Spleen (tissue), 13 donors: ENCODE measurements at regions of chr5 and their contacts with region 1.

Region 1: GRCh38 chr5:139696894-139697658 is 48.9 kb downstream of the CXXC5 start:
- DNase-seq: peak; percentile 86
- H3K4me3 ChIP-seq: peak overlapping the region in 7 of 8 donors; percentile 4 to 57 (median 21)
- H3K27ac ChIP-seq: peak overlapping the region in 7 of 8 donors; percentile 55 to 84 (median 80)
- H3K4me1 ChIP-seq: peaks cover 26 to 68% (median 48%) of the 10 kb centered on the region in 6 donors
- H3K27me3 ChIP-seq: peaks cover 0 to 40% (median 14%) of the 10 kb centered on the region in 7 donors
- CTCF ChIP-seq: no peak
- POLR2A ChIP-seq: no peak

Region 2: DNA sequence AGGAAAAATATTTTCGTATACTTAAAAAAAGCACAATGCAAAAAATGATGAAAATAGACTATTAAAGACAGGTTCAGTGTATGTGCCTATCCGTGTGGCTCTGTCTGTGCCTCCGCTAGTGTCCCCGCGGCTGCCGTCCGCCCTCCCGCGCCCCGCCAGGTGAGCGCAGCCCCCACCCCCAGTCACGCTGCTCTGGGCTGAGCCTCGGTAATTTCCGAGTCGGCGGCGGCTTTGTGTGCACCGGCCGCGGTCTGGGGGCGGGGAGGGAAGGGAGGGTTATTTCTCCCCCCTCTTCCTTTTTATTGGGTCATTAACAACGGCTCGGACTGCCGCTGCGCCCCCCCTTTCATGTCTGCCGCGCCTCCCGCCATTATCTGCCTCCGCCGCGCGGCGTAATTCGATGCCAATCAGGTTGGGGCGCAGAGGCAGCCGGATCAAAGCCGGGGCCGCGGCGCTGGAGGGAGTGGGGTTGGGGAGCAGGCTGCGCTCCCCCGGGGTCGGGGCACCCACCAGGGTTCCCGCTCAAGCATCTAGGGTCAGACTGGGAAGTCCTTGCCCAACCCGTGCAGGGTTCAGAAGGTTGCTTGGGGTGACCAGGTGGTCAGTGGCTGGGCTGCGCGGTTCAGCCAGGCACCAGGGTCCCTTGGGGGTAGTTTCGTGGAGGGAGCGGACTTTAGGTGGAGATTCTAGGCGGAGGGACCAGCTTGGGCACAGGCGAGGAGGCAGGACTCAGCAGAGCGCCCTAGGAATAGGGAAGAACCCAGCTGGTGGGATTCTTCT is 59.0 kb after region 1 on chr5:
- intact Hi-C with region 1: loop called (anchors 10 kb)
- DNase-seq: no peak
- H3K4me3 ChIP-seq: peak overlapping the region in 6 of 8 donors; percentile 9 to 59 (median 18)
- H3K27ac ChIP-seq: no peak overlapping the region
- H3K4me1 ChIP-seq: peaks cover 0 to 54% (median 36%) of the 10 kb centered on the region in 6 donors
- H3K27me3 ChIP-seq: peaks cover 0 to 76% (median 24%) of the 10 kb centered on the region in 7 donors
- CTCF ChIP-seq: no peak
- POLR2A ChIP-seq: no peak

Region 3: GRCh38 chr5:140011297-140011802 is 314.3 kb after region 1 on chr5:
- intact Hi-C with region 1: no loop called
- DNase-seq: no peak
- H3K4me3 ChIP-seq: no peak overlapping the region
- H3K27ac ChIP-seq: no peak overlapping the region
- H3K4me1 ChIP-seq: peaks cover 0 to 13% (median 0%) of the 10 kb centered on the region in 6 donors
- H3K27me3 ChIP-seq: peaks cover 0 to 18% (median 0%) of the 10 kb centered on the region in 7 donors
- CTCF ChIP-seq: no peak
- POLR2A ChIP-seq: no peak